IMR-90 (cell line): ENCODE measurements at regions of chr6 and their contacts with region 1.

Region 1: GRCh38 chr6:144013486-144013909 is 5.4 kb upstream of the PLAGL1 start:
- DNase-seq: peak; percentile 71
- ATAC-seq: peak; percentile 90
- H3K4me3 ChIP-seq: no peak overlapping the region
- H3K27ac ChIP-seq: no peak overlapping the region
- H3K4me1 ChIP-seq: peaks cover 2% of the 10 kb centered on the region; the same call in 1 of the 2 replicates
- H3K27me3 ChIP-seq: peaks cover 2% of the 10 kb centered on the region
- CTCF ChIP-seq: peak; percentile 93
- POLR2A ChIP-seq: no peak
- RAD21 ChIP-seq: peak; percentile 93

Region 2: GRCh38 chr6:143450453-143451371 is 562.8 kb before region 1 on chr6 and contains the starts of genes ADAT2 and PEX3:
- CTCF ChIA-PET with region 1: no interaction called
- POLR2A ChIA-PET with region 1: no interaction called
- dilution Hi-C with region 1: no loop called
- in situ Hi-C with region 1: no loop called
- intact Hi-C with region 1: loop called (anchors 10 kb)
- DNase-seq: peak; percentile 92
- ATAC-seq: peak; percentile 99
- H3K4me3 ChIP-seq: peak within 1 kb of the TSS; percentile 75
- H3K27ac ChIP-seq: peak within 1 kb of the TSS; percentile 71
- H3K4me1 ChIP-seq: peaks cover 5% of the 10 kb centered on the region
- H3K27me3 ChIP-seq: no peaks in the 10 kb centered on the region
- CTCF ChIP-seq: no peak
- POLR2A ChIP-seq: peak; percentile 65; the same call in 1 of the 2 replicates
- RAD21 ChIP-seq: 0 out of 2 replicates have a peak, but pooled peaks have one; percentile 14
- total RNA-seq, gene ADAT2: 2.7 and 3.9 TPM in 2 replicates
- total RNA-seq, gene PEX3: 13.3 and 16.4 TPM in 2 replicates

Region 3: DNA sequence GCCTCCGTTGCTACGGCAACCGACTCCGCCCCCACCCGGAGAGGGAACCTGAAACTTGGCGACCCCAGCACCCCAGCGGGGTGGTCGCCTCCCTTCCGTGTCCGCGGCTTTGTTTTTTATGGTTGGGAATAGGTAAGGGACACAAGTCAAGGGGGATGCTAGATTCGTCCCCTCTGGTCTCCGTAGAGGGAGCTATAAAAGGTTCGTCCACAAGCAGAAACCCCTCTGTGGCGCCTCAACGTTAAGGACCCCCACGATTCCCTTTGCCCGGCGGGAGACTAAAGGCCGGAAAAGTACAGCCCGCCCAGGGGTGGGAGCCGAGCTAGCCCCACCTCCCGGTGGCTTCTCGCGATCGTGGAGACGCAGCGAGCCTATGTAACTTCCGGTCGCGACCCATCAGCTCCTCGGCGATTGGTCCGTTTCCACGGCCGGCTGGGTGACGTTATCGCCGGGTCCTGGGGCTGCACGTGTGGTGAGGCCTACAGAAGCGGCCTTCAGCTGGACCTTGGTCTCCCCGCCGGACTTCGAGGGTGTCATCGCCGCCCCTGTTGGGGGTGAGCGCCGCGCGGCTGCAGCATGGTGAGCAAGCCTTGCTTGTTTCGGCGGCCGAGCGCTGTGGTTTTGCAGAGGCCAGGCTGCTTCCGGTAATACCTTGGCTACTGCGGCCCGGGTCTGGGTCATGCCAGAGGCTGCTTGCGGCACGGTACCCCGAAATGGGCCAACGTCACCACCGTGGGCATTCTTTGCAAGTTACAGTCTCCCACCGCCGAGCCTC is 170.4 kb before region 1 on chr6 and contains the start of gene LTV1:
- CTCF ChIA-PET with region 1: no interaction called
- POLR2A ChIA-PET with region 1: no interaction called
- dilution Hi-C with region 1: no loop called
- in situ Hi-C with region 1: no loop called
- intact Hi-C with region 1: loop called (anchors 10 kb)
- DNase-seq: peak; percentile 96
- ATAC-seq: peak; percentile 99
- H3K4me3 ChIP-seq: peak within 1 kb of the TSS; percentile 86
- H3K27ac ChIP-seq: peak within 1 kb of the TSS; percentile 88
- H3K4me1 ChIP-seq: peaks cover 3% of the 10 kb centered on the region; the same call in 1 of the 2 replicates
- H3K27me3 ChIP-seq: no peaks in the 10 kb centered on the region
- CTCF ChIP-seq: no peak
- POLR2A ChIP-seq: peak; percentile 89
- RAD21 ChIP-seq: no peak
- total RNA-seq, gene LTV1: 11.1 and 26.1 TPM in 2 replicates

Region 4: DNA sequence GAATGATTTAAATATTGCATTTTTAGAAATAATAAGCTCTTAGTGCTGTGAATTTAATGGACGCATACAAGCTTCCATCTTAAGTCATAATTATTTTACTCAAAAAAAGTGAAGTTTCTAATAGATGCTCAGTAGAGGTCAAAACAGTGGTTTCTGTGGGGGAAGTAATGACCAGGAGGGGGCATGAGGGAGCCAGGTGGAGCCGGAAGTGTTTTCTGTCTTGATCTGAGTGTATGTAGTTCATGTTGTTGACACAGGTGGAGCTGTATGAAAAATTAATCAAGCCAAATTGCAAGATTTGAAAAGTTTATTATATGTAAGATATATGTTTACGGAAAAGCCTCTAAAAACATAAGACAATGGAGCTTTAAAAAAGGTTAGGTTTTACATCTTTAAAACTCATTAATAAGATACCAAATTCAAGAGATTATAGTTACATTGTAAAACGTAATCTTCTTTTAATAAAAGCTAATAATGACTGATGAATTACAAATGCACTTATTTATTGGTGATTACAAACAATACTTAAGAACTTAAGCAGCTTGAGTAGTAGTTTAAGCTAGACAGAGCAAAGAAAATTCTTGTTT is 73.4 kb before region 1 on chr6:
- CTCF ChIA-PET with region 1: interaction called, 10 read pairs
- POLR2A ChIA-PET with region 1: no interaction called
- dilution Hi-C with region 1: no loop called
- in situ Hi-C with region 1: no loop called
- intact Hi-C with region 1: loop called (anchors 1 kb)
- DNase-seq: peak; percentile 38
- ATAC-seq: peak; percentile 56; the same call in 1 of the 2 replicates
- H3K4me3 ChIP-seq: no peak overlapping the region
- H3K27ac ChIP-seq: no peak overlapping the region
- H3K4me1 ChIP-seq: no peaks in the 10 kb centered on the region
- H3K27me3 ChIP-seq: peaks cover 4% of the 10 kb centered on the region
- CTCF ChIP-seq: peak; percentile 55
- POLR2A ChIP-seq: no peak
- RAD21 ChIP-seq: peak; percentile 53